Tibial artery (tissue), 4 donors: ENCODE measurements at regions of chr22 and their contacts with region 1.

Region 1: GRCh38 chr22:41285820-41286638 is at the start of gene RANGAP1:
- DNase-seq: peak; percentile 96 to 99
- H3K4me3 ChIP-seq: peak within 1 kb of the TSS; percentile 77 to 95
- H3K27ac ChIP-seq: peak within 1 kb of the TSS; percentile 68 to 70
- H3K4me1 ChIP-seq: peaks cover 0 to 23% (median 13%) of the 10 kb centered on the region in 4 donors
- H3K27me3 ChIP-seq: no peaks in the 10 kb centered on the region
- CTCF ChIP-seq: peak; percentile 36 to 47

Region 2: DNA sequence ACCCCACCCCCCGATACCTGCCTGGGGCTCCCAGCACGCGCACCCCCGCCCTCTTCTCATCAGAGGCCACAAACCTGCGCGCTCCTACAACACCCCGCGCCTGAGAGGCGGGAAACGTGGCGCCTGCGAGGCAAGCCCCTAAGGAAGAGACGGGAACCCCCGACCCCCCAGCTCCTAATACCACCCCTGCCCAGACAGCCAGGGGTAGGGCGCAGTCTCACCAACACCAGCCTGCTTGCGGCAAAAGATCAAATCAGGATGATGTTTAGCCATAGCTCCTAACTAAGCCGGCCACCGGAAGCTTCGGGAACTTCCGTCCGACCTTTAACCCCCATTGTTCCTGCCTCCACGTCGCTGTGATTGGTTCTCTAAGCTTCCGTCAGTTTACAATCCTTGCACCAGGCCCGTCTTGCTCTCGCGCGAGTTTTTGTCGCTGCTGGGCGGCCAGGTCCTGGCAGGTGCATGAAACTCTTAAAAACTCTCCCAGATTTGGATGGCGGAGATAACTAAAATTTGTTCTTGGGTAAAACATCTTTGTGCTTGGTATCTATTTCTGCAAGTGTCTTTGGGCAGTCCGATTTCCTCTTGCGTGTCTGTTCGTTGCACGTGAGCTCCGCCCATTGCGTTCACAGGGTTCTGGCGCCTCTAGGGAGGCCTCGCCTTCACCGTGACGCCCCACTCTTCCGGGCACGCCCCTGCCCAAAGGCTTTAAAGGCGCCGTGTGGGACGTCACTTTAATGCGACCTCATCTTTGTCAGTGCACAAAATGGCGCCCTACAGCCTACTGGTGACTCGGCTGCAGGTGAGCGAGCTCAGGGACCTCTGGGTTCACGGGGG is 182.6 kb after region 1 on chr22 and contains the starts of genes ACO2 and PHF5A:
- intact Hi-C with region 1: loop called (anchors 10 kb)
- DNase-seq: peak; percentile 97 to 98
- H3K4me3 ChIP-seq: peak within 1 kb of the TSS; percentile 84 to 93
- H3K27ac ChIP-seq: peak within 1 kb of the TSS; percentile 92 to 93
- H3K4me1 ChIP-seq: peaks cover 0 to 33% (median 27%) of the 10 kb centered on the region in 4 donors
- H3K27me3 ChIP-seq: no peaks in the 10 kb centered on the region
- CTCF ChIP-seq: no peak

Region 3: GRCh38 chr22:41526837-41527799 is 241.1 kb after region 1 on chr22:
- intact Hi-C with region 1: loop called (anchors 5 kb)
- DNase-seq: no peak
- H3K4me3 ChIP-seq: no peak overlapping the region
- H3K27ac ChIP-seq: peak overlapping the region; percentile 92 to 97
- H3K4me1 ChIP-seq: peaks cover 0 to 47% (median 39%) of the 10 kb centered on the region in 4 donors
- H3K27me3 ChIP-seq: no peaks in the 10 kb centered on the region
- CTCF ChIP-seq: peak; percentile 78 to 81